MCF 10A (cell line): ENCODE measurements at regions of chr9 and their contacts with region 1.

Region 1: DNA sequence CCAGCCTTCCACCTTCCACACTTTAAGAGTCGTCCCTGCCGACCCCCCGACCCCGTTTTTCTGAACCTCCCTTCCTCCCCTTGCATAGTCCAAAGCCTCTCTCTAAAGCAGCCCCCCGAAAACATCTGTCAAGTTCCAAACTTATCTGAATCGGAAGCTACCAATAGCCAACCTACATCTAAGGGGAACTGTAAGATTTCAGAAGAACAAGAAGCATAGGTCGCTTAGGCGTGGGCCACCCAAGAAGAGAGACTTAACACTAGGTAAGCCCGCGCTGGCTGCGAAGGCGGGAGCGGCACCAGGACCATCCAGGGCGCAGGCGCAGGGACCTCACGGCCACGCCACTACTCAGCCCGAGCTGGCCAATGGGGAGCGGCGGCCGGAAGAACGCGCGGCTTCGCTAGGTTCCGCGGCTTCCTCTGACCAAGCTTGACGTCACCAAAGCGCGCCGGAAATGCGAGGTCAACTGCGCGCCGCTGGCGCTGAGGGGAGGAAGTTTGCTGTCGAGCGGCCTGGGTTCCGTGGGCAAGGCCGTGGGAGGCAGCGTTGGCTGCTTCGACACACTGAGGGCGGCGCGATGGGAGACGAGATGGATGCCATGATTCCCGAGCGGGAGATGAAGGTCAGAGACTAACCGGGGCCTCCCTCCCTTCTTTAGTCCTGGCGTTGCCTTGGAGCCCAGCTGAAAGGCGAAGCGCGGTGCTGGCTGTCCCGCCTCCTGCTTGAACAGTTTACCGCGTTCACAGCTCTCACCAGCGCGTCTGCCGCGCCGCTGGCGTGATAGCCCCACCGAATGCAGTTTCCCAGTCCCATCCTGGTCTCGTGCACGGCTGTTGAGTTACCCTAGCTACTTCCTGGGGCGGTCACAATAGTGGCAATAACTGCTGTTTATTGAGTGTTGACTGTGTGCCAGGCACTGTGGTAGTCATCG is at the start of gene NUP214:
- DNase-seq: peak; percentile 97
- H3K4me3 Mint-ChIP-seq: peak within 1 kb of the TSS; percentile 96
- H3K27ac Mint-ChIP-seq: peak within 1 kb of the TSS; percentile 97
- H3K4me1 Mint-ChIP-seq: no peaks in the 10 kb centered on the region
- H3K27me3 Mint-ChIP-seq: no peaks in the 10 kb centered on the region
- CTCF ChIP-seq: no peak
- total RNA-seq, gene NUP214: 41.8 and 46.9 TPM in 2 replicates

Region 2: DNA sequence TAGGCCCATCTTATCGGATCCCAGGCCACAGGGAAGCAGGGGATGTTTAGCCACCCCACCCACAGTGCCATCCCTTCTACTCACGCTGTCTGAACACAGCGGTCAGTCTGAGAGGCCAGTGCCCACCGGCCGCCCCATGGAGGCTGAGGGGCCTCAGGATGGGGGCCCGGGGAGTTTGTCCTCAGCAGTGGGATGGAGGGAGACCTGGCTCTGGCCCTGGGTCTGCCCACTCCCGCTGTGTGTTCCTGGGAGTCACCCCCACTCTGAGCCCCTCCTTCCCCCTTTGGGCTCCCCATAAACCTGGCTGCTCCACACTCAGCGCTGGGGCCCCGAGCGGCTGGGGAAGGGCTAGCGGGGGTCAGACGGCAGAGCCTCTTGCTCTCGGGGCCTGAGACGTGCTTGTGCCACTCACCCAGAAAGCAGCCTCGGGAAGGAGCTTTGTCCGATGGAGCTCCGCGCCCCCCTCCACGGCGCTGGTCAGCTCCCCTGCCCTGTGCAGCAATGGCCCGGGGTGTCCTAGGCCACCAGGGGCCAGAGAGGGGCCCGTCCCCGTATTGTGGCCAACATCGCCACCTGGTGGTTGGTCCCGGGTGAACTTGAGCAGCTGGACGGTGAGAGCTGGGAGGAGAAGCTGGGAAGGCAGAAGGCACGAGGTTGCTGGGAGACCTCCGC is 127.3 kb before region 1 on chr9:
- CTCF ChIA-PET with region 1: no interaction called
- POLR2A ChIA-PET with region 1: no interaction called
- intact Hi-C with region 1: no loop called
- DNase-seq: peak; percentile 73
- H3K4me3 Mint-ChIP-seq: no peak overlapping the region
- H3K27ac Mint-ChIP-seq: no peak overlapping the region
- H3K4me1 Mint-ChIP-seq: peaks cover 18% of the 10 kb centered on the region
- H3K27me3 Mint-ChIP-seq: peaks cover 17% of the 10 kb centered on the region
- CTCF ChIP-seq: peak; percentile 89

Region 3: DNA sequence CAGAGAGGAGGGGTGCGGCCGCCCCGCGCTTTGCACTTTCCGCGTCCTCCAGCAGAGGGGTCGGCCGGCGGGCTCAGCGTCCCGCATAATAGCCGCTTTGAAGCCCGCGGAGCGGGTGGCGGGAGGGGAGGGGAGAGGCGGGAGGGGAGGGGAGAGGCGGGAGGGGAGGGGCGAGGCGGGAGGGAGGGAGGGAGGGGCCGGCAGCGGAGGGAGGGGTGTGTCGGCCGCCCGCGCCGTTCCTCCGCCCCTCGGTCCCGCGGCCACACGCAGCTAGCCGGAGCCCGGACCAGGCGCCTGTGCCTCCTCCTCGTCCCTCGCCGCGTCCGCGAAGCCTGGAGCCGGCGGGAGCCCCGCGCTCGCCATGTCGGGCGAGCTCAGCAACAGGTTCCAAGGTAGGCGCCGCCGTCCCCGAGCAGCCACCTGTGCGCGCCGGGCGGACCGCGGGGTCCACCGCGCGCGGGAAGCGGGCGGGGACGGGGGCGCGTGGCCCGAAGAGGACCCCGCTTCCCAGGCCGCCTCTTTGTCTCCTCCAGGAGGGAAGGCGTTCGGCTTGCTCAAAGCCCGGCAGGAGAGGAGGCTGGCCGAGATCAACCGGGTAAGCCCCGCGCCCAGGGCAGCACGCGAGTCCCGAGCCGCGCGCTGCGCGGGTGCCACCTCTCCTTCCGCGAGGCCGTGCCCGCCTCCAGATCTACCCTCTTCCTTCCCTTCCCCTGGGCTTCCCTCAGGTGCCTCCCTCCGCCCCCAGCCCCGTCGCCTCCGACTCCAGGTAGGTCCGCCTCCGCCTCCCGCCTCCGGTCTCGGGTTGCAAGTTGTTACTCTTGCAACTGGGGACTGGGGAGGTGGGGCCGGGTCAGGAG is 28.9 kb before region 1 on chr9 and contains the start of gene AIF1L:
- CTCF ChIA-PET with region 1: interaction called, 3 read pairs
- POLR2A ChIA-PET with region 1: interaction called, 20 read pairs
- intact Hi-C with region 1: no loop called
- DNase-seq: peak; percentile 47
- H3K4me3 Mint-ChIP-seq: peak within 1 kb of the TSS; percentile 70
- H3K27ac Mint-ChIP-seq: no peak within 1 kb of the TSS
- H3K4me1 Mint-ChIP-seq: peaks cover 10% of the 10 kb centered on the region
- H3K27me3 Mint-ChIP-seq: no peaks in the 10 kb centered on the region
- CTCF ChIP-seq: no peak
- total RNA-seq, gene AIF1L: 2.6 and 4.1 TPM in 2 replicates

Region 4: GRCh38 chr9:131138676-131139075 is 13.3 kb after region 1 on chr9:
- CTCF ChIA-PET with region 1: no interaction called
- POLR2A ChIA-PET with region 1: interaction called, 13 read pairs
- intact Hi-C with region 1: no loop called
- DNase-seq: no peak
- H3K4me3 Mint-ChIP-seq: no peak overlapping the region
- H3K27ac Mint-ChIP-seq: no peak overlapping the region
- H3K4me1 Mint-ChIP-seq: no peaks in the 10 kb centered on the region
- H3K27me3 Mint-ChIP-seq: no peaks in the 10 kb centered on the region
- CTCF ChIP-seq: no peak

Region 5: GRCh38 chr9:131289301-131290038 is 164.1 kb after region 1 on chr9 and contains the start of gene PLPP7:
- CTCF ChIA-PET with region 1: no interaction called
- POLR2A ChIA-PET with region 1: no interaction called
- intact Hi-C with region 1: no loop called
- DNase-seq: no peak
- H3K4me3 Mint-ChIP-seq: no peak within 1 kb of the TSS
- H3K27ac Mint-ChIP-seq: no peak within 1 kb of the TSS
- H3K4me1 Mint-ChIP-seq: no peaks in the 10 kb centered on the region
- H3K27me3 Mint-ChIP-seq: no peaks in the 10 kb centered on the region
- CTCF ChIP-seq: no peak
- total RNA-seq, gene PLPP7: not detected in 2 replicates